WTC11 (cell line): ENCODE measurements at regions of chr15 and their contacts with region 1.

Region 1: GRCh38 chr15:75684642-75685041 is 28.0 kb downstream of the CSPG4 start:
- DNase-seq: no peak
- ATAC-seq: no peak
- H3K4me3 Mint-ChIP-seq: no peak overlapping the region
- H3K27ac Mint-ChIP-seq: no peak overlapping the region
- H3K4me1 Mint-ChIP-seq: peaks cover 22% of the 10 kb centered on the region
- H3K27me3 Mint-ChIP-seq: 0 out of 2 replicates have a peak, but pooled peaks cover 2% of the 10 kb centered on the region
- CTCF ChIP-seq: no peak

Region 2: GRCh38 chr15:74768771-74769342 is 915.8 kb before region 1 on chr15:
- CTCF ChIA-PET with region 1: no interaction called
- POLR2A ChIA-PET with region 1: no interaction called
- DNase-seq: peak; percentile 81
- ATAC-seq: peak; percentile 58
- H3K4me3 Mint-ChIP-seq: peak overlapping the region; percentile 58
- H3K27ac Mint-ChIP-seq: no peak overlapping the region
- H3K4me1 Mint-ChIP-seq: peaks cover 23% of the 10 kb centered on the region
- H3K27me3 Mint-ChIP-seq: peaks cover 21% of the 10 kb centered on the region
- CTCF ChIP-seq: peak; percentile 90

Region 3: DNA sequence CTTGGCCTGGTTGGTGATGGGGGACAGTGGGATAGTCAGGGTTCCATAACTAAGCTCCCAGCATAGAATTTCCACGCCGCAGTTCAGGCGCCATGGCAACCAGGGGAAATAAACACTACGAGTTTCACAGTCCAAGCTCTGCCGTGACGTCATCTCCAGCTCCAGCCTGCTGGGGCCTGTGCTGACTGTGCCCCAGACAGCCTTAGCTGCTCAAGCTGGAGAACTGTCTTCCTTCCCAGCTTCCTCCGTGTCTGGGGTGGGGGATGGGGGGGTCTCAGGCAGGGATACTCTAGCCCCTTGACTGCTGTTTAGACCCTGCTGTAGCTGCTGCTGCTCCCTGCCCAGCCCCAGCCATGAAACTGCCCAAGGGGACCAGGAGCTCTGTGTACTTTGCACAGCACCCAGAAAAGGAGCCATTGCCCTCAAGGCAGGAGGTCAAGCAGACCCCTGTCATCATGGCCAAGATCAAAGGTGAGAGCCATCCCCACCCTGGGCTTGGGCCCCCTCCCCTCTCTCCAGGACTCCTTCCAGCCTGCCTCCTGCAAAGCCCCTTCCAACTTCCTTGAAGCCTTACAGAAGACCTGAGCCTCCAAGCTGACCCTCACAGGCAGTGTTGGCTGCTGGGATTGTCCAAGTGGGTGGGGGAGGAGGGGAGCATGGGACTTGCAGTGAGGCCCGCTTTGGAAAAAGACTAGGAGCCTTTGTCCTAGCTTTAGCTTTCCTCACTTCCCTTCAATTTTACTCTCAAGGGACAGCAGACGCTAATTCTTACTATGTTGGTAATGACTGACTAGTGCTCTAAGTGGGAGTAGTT is 39.4 kb after region 1 on chr15:
- CTCF ChIA-PET with region 1: interaction called, 21 read pairs
- POLR2A ChIA-PET with region 1: no interaction called
- DNase-seq: peak; percentile 35
- ATAC-seq: peak; percentile 9; the same call in 1 of the 2 replicates
- H3K4me3 Mint-ChIP-seq: no peak overlapping the region
- H3K27ac Mint-ChIP-seq: no peak overlapping the region
- H3K4me1 Mint-ChIP-seq: no peaks in the 10 kb centered on the region; the same call in 1 of the 2 replicates
- H3K27me3 Mint-ChIP-seq: peaks cover 50% of the 10 kb centered on the region
- CTCF ChIP-seq: no peak

Region 4: GRCh38 chr15:75732809-75733451 is 48.3 kb after region 1 on chr15:
- CTCF ChIA-PET with region 1: interaction called, 18 read pairs
- POLR2A ChIA-PET with region 1: no interaction called
- DNase-seq: peak; percentile 92
- ATAC-seq: peak; percentile 82
- H3K4me3 Mint-ChIP-seq: peak overlapping the region; percentile 20; the same call in 1 of the 2 replicates
- H3K27ac Mint-ChIP-seq: no peak overlapping the region
- H3K4me1 Mint-ChIP-seq: peaks cover 44% of the 10 kb centered on the region
- H3K27me3 Mint-ChIP-seq: peaks cover 2% of the 10 kb centered on the region; the same call in 1 of the 2 replicates
- CTCF ChIP-seq: peak; percentile 75

Region 5: GRCh38 chr15:75738647-75739331 is 54.1 kb after region 1 on chr15:
- CTCF ChIA-PET with region 1: interaction called, 11 read pairs
- POLR2A ChIA-PET with region 1: no interaction called
- DNase-seq: peak; percentile 98
- ATAC-seq: peak; percentile 98
- H3K4me3 Mint-ChIP-seq: peak overlapping the region; percentile 93
- H3K27ac Mint-ChIP-seq: no peak overlapping the region
- H3K4me1 Mint-ChIP-seq: peaks cover 28% of the 10 kb centered on the region
- H3K27me3 Mint-ChIP-seq: peaks cover 40% of the 10 kb centered on the region
- CTCF ChIP-seq: no peak